CD8-positive, alpha-beta T cell (primary cell): ENCODE measurements at regions of chr12 and their contacts with region 1.

Region 1: DNA sequence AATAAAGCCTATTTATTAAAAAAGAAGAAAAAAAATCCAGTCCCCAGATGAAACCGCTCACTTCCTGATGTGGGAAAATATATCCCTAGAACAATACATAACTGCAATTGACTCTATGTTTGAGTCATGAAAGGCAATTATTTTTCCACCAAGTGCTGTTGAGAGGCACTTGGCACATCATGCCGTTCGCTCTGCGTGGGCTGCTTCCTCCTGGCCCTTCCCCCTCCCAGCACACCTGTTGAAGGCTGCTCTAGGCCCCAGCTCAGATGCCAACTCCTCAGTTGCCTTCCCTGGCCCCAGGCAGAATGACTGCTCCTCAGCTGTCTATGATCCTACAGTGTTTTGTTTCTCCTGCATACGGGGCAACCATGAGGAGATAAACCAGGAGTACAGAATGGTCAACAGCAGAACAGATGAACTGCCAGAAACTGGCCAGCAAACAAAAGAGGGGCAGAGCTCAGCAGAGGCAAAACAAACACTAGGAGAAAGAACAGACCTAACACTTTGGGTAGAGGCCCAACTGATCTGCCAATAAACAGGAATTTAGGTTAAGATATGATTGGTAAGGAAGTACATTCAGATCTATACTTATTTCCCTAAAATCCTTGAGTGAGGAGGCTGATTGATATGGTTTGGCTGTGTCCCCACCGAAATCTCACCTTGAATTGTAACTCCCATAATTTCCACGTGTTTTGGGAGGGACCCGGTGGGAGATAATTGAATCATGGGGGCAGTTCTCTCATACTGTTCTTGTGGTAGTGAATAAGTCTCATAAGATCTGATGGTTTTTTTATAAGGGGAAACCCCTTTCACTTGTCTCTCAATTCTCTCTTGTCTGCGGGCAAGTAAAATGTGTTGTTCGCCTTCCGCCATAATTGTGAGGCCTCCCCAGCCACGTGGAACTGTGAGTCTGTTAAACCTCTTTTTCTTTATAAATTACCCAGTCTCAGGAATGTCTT is 58.6 kb downstream of the SLC38A1 start:
- DNase-seq: peak in 8 of 9 experiments; percentile 39 to 84 (median 66)
- ATAC-seq: peak; percentile 63
- H3K4me3 ChIP-seq: no peak overlapping the region
- H3K4me3 Mint-ChIP-seq: peak overlapping the region; percentile 69
- H3K27ac ChIP-seq: peak overlapping the region; percentile 38 to 83
- H3K27ac Mint-ChIP-seq: peak overlapping the region; percentile 94
- H3K4me1 ChIP-seq: peaks cover 85% of the 10 kb centered on the region
- H3K4me1 Mint-ChIP-seq: peaks cover 95% of the 10 kb centered on the region
- H3K27me3 ChIP-seq: no peaks in the 10 kb centered on the region
- H3K27me3 Mint-ChIP-seq: no peaks in the 10 kb centered on the region
- CTCF ChIP-seq: no peak

Region 2: DNA sequence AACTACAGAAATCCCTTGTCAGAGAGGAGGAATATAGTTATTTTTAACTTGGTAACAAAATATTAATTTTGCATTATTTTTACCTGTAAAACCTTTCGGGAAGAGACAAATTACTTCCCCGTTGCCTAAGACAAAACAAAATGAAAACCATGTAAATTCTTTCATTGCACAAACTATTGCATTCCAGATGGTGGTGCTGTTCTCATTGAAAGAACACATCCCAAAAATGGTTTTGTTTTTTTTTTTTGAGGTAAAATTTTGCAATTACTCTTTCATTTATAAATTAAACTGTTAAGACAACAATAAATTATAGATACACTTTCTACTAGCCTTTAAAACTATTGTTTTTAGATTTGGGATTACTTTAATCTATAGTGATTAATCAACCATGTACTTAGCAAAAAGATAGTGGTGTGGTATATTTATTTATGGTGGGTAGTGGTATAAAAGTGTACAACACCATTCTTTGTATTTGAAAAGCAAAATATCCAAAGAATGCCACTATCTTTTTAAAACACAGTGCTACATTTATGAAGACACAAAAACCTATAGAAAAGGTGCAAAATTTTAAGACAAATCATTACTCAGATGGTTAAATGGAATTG is 56.8 kb before region 1 on chr12:
- CTCF ChIA-PET with region 1: interaction called, 3 read pairs
- POLR2A ChIA-PET with region 1: no interaction called
- intact Hi-C with region 1: loop called in 1 of 2 experiments (anchors 5 kb)
- DNase-seq: peak in 2 of 9 experiments; percentile 40 to 65
- ATAC-seq: no peak
- H3K4me3 ChIP-seq: no peak overlapping the region
- H3K4me3 Mint-ChIP-seq: no peak overlapping the region
- H3K27ac ChIP-seq: no peak overlapping the region
- H3K27ac Mint-ChIP-seq: no peak overlapping the region
- H3K4me1 ChIP-seq: peaks cover 13% of the 10 kb centered on the region
- H3K4me1 Mint-ChIP-seq: peaks cover 19% of the 10 kb centered on the region
- H3K27me3 ChIP-seq: no peaks in the 10 kb centered on the region
- H3K27me3 Mint-ChIP-seq: peaks cover 1% of the 10 kb centered on the region
- CTCF ChIP-seq: peak; percentile 97

Region 3: GRCh38 chr12:46198913-46199312 is 11.3 kb before region 1 on chr12:
- CTCF ChIA-PET with region 1: interaction called, 11 read pairs
- POLR2A ChIA-PET with region 1: interaction called, 73 read pairs
- intact Hi-C with region 1: loop called in 1 of 2 experiments (anchors 1 kb)
- DNase-seq: peak in 1 of 9 experiments; percentile 34
- ATAC-seq: no peak
- H3K4me3 ChIP-seq: no peak overlapping the region
- H3K4me3 Mint-ChIP-seq: no peak overlapping the region
- H3K27ac ChIP-seq: no peak overlapping the region
- H3K27ac Mint-ChIP-seq: peak overlapping the region; percentile 73
- H3K4me1 ChIP-seq: peaks cover 11% of the 10 kb centered on the region
- H3K4me1 Mint-ChIP-seq: peaks cover 38% of the 10 kb centered on the region
- H3K27me3 ChIP-seq: no peaks in the 10 kb centered on the region
- H3K27me3 Mint-ChIP-seq: no peaks in the 10 kb centered on the region
- CTCF ChIP-seq: no peak

Region 4: GRCh38 chr12:46224386-46224785 is 14.2 kb after region 1 on chr12:
- CTCF ChIA-PET with region 1: interaction called, 3 read pairs
- POLR2A ChIA-PET with region 1: interaction called, 73 read pairs
- intact Hi-C with region 1: loop called (anchors 1 to 2 kb)
- DNase-seq: no peak
- ATAC-seq: no peak
- H3K4me3 ChIP-seq: no peak overlapping the region
- H3K4me3 Mint-ChIP-seq: no peak overlapping the region
- H3K27ac ChIP-seq: peak overlapping the region in 1 of 2 experiments; percentile 22
- H3K27ac Mint-ChIP-seq: peak overlapping the region; percentile 87
- H3K4me1 ChIP-seq: peaks cover 70% of the 10 kb centered on the region
- H3K4me1 Mint-ChIP-seq: peaks cover 93% of the 10 kb centered on the region
- H3K27me3 ChIP-seq: no peaks in the 10 kb centered on the region
- H3K27me3 Mint-ChIP-seq: no peaks in the 10 kb centered on the region
- CTCF ChIP-seq: no peak

Region 5: GRCh38 chr12:46246021-46246700 is 36.0 kb after region 1 on chr12:
- CTCF ChIA-PET with region 1: interaction called, 3 read pairs
- POLR2A ChIA-PET with region 1: interaction called, 4 read pairs
- intact Hi-C with region 1: loop called in 1 of 2 experiments (anchors 5 kb)
- DNase-seq: peak in 8 of 9 experiments; percentile 29 to 82 (median 46)
- ATAC-seq: peak; percentile 89
- H3K4me3 ChIP-seq: no peak overlapping the region
- H3K4me3 Mint-ChIP-seq: peak overlapping the region; percentile 64
- H3K27ac ChIP-seq: peak overlapping the region in 1 of 2 experiments; percentile 59
- H3K27ac Mint-ChIP-seq: peak overlapping the region; percentile 86
- H3K4me1 ChIP-seq: peaks cover 57% of the 10 kb centered on the region
- H3K4me1 Mint-ChIP-seq: peaks cover 92% of the 10 kb centered on the region
- H3K27me3 ChIP-seq: no peaks in the 10 kb centered on the region
- H3K27me3 Mint-ChIP-seq: no peaks in the 10 kb centered on the region
- CTCF ChIP-seq: no peak

Region 6: DNA sequence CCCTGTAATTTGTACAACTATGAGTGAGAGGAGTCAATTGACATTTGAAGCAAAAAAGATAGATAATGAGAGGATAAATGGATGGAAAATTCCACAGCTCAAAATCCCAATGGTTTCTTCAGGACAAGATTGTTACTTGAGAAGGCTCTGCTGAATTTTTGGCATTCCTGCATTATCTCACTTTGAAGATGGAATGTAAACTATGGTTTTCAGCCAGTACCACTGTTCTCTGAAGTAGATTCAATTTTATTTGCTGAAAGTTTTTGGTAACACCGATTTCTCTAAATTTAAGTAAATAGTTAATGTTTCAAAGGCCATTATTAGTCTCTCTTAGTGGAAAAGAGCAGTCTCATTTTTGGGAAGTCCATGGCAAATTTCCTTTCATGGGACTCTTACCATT is 284.2 kb after region 1 on chr12:
- CTCF ChIA-PET with region 1: no interaction called
- POLR2A ChIA-PET with region 1: no interaction called
- intact Hi-C with region 1: no loop called
- DNase-seq: no peak
- ATAC-seq: no peak
- H3K4me3 ChIP-seq: no peak overlapping the region
- H3K4me3 Mint-ChIP-seq: no peak overlapping the region
- H3K27ac ChIP-seq: no peak overlapping the region
- H3K27ac Mint-ChIP-seq: no peak overlapping the region
- H3K4me1 ChIP-seq: no peaks in the 10 kb centered on the region
- H3K4me1 Mint-ChIP-seq: no peaks in the 10 kb centered on the region
- H3K27me3 ChIP-seq: no peaks in the 10 kb centered on the region
- H3K27me3 Mint-ChIP-seq: no peaks in the 10 kb centered on the region
- CTCF ChIP-seq: no peak

Region 7: DNA sequence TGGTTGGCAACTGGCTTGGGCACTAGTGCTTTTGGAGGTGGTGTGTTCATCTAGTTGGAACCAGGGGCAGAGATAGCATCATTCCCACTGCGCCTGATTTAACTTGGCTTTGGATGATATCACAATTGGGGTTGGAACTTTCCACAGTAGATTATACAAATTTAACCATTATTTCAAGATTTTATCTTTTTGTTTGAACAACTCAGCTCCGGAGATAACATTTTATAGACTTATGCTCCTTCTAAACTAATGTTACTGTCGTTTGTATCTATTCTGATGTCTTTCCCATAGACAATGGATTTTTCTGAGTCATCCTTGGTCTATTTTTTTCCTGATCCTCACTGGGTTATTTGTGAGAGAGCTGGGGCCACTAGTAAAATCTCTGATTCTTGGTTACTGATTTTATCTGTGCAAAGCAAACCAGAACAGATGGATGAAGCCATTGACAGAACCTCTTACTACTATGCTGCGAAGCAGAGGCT is 440.5 kb after region 1 on chr12:
- CTCF ChIA-PET with region 1: no interaction called
- POLR2A ChIA-PET with region 1: no interaction called
- intact Hi-C with region 1: no loop called
- DNase-seq: no peak
- ATAC-seq: no peak
- H3K4me3 ChIP-seq: no peak overlapping the region
- H3K4me3 Mint-ChIP-seq: no peak overlapping the region
- H3K27ac ChIP-seq: no peak overlapping the region
- H3K27ac Mint-ChIP-seq: no peak overlapping the region
- H3K4me1 ChIP-seq: no peaks in the 10 kb centered on the region
- H3K4me1 Mint-ChIP-seq: peaks cover 1% of the 10 kb centered on the region
- H3K27me3 ChIP-seq: no peaks in the 10 kb centered on the region
- H3K27me3 Mint-ChIP-seq: no peaks in the 10 kb centered on the region
- CTCF ChIP-seq: no peak